ENCODE measurements at regions of chr11 and their contacts with region 1.

Region 1: GRCh38 chr11:113289431-113290187 is 24.8 kb upstream of the TTC12 start:
- DNase-seq: peak in 1 of 2 experiments; percentile 55
- H3K4me3 ChIP-seq: no peak overlapping the region
- H3K27ac ChIP-seq: no peak overlapping the region
- H3K4me1 ChIP-seq: peaks cover 15% of the 10 kb centered on the region
- H3K27me3 ChIP-seq: no peaks in the 10 kb centered on the region; the same call in none of the 2 replicates
- CTCF ChIP-seq: peak; percentile 98

Region 2: GRCh38 chr11:112219476-112220232 is 1070.0 kb before region 1 on chr11:
- CTCF ChIA-PET with region 1: no interaction called
- POLR2A ChIA-PET with region 1: no interaction called
- intact Hi-C with region 1: loop called (anchors 1 kb)
- DNase-seq: peak; percentile 25 to 67
- H3K4me3 ChIP-seq: no peak overlapping the region
- H3K27ac ChIP-seq: no peak overlapping the region
- H3K4me1 ChIP-seq: peaks cover 28% of the 10 kb centered on the region
- H3K27me3 ChIP-seq: no peaks in the 10 kb centered on the region
- CTCF ChIP-seq: peak; percentile 85

Region 3: GRCh38 chr11:112588252-112588694 is 701.3 kb before region 1 on chr11:
- CTCF ChIA-PET with region 1: interaction called, 10 read pairs
- POLR2A ChIA-PET with region 1: no interaction called
- intact Hi-C with region 1: loop called (anchors 1 kb)
- DNase-seq: peak; percentile 20 to 76
- H3K4me3 ChIP-seq: no peak overlapping the region
- H3K27ac ChIP-seq: no peak overlapping the region
- H3K4me1 ChIP-seq: peaks cover 5% of the 10 kb centered on the region; the same call in 1 of the 2 replicates
- H3K27me3 ChIP-seq: no peaks in the 10 kb centered on the region
- CTCF ChIP-seq: peak; percentile 91

Region 4: GRCh38 chr11:112795142-112795815 is 494.3 kb before region 1 on chr11:
- CTCF ChIA-PET with region 1: interaction called, 3 read pairs
- POLR2A ChIA-PET with region 1: no interaction called
- intact Hi-C with region 1: loop called (anchors 10 kb)
- DNase-seq: peak in 1 of 2 experiments; percentile 30
- H3K4me3 ChIP-seq: no peak overlapping the region
- H3K27ac ChIP-seq: no peak overlapping the region
- H3K4me1 ChIP-seq: no peaks in the 10 kb centered on the region
- H3K27me3 ChIP-seq: no peaks in the 10 kb centered on the region
- CTCF ChIP-seq: peak; percentile 81